Right ventricle myocardium superior (tissue), 1 donor: ENCODE measurements at regions of chr12 and their contacts with region 1.

Region 1: GRCh38 chr12:108562348-108563135 is at the start of gene ISCU:
- DNase-seq: peak; percentile 98
- ATAC-seq: peak; percentile 90
- total RNA-seq, gene ISCU: 484 TPM

Region 2: GRCh38 chr12:108381787-108382436 is 180.6 kb before region 1 on chr12:
- intact Hi-C with region 1: no loop called
- DNase-seq: no peak
- ATAC-seq: no peak

Region 3: DNA sequence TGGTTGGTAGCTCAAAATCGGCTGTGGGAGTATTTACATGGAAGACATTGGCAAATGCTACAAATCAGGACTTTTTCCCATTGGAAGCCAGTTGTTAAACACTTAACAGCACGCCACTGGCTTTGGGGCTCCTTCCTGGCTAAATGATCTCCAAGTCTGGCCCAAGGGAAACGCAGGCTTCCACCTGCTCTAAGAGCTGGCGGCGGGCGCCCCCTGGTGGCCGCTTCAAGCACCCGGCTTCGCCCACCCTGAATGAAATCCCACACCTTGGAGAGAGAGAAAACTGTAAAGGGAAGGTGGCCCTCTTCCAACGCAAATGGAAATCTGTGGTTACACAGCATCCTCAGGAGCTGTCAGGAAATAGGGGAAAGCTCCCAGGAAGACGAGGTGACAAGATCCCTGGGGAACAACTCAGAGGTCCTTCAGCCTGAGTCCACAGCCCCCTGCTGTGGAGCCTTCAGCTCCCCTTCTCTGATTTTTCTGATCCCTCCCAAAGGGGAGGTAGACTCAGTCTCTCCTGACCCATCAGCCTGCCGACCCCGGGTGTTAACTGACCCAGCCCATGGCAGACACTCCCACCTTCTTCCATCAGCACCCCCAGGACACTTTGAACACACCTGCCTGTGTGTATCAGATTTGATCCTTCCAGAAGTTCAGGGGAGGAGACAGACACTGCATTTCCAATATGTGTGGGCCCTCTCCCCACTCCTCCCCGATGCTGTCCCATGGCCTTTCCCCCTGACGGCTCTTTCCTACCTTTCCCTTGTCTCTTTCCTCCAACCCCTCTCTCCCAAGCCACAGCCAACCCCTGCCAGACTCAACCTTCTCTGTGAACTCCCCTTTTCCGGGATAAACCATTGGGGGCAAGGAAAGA is 55.8 kb after region 1 on chr12:
- intact Hi-C with region 1: loop called (anchors 2 kb)
- DNase-seq: peak; percentile 88
- ATAC-seq: peak; percentile 91

Region 4: DNA sequence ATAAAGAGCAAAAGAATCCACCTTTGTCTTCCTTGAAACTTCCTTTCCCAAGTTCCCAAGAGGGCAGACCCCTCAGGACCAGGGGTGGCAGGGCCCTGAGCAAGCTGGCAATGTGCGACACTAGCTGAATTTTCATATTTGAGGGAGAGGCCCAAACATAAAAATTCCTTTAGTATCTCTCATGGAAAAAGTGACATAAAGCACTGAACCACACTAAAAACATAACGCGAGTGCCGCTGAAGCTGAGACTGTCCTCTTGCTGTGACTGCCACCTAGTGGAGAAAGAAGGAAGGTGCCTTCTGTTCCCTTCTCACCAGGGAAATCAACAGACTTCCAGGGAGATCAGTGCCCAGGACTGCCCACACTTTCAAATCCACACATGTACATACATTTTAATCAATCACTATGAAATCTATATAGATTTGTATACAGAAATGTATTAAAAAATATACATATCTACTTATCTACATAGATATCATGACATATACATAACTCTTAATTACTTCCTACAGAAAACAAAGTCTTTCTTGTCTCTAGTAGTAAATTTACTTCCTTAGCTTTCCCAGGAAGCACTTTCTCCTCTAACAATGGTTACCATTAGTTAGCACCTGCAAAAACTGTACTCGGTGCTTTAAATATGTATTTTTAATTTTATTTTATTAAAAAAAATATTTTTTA is 241.0 kb after region 1 on chr12:
- intact Hi-C with region 1: loop called (anchors 5 kb)
- DNase-seq: peak; percentile 60
- ATAC-seq: peak; percentile 84

Region 5: GRCh38 chr12:108856428-108857157 is 294.1 kb after region 1 on chr12:
- intact Hi-C with region 1: loop called (anchors 2 kb)
- DNase-seq: peak; percentile 87
- ATAC-seq: peak; percentile 62

Region 6: DNA sequence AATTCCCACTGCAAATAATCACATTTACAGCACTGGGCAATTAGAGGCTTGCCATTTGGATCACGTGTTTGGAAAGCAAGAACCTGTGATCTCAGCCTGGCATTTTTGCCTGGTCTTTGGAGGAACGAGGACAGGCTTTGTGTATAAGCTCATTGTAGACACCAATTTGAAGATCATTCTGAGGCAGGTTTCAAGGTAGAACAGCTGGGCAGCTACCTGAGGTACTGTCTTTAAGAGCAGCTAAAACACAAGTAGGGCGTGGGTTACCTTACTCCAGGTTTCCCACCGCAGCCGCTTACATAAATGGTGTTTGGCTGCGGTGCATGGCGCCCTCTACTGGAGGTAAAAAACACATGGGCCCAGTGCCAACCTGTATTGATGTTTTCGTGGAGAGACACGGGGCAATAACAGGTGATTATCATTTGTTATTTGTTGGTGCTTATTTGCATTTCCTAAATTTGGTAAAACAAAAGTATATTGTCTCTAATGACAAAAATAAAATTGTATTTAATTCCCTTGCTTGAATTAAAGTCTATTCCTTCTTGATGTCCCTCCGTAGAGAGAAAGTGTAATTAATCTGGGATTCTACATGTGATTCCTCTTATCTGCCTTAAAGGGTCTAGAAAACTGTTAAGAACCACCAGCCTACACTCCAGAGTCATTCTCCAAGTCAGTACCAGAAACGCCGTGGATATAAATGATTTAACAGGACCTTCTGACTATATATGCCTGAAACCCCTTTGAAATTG is 388.6 kb after region 1 on chr12:
- intact Hi-C with region 1: loop called (anchors 10 kb)
- DNase-seq: peak; percentile 82
- ATAC-seq: peak; percentile 71

Region 7: GRCh38 chr12:109093022-109093918 is 530.7 kb after region 1 on chr12 and contains the start of gene ALKBH2:
- intact Hi-C with region 1: loop called (anchors 5 kb)
- DNase-seq: peak; percentile 97
- ATAC-seq: peak; percentile 84
- total RNA-seq, gene ALKBH2: 7.2 TPM